GM10248 (cell line): ENCODE measurements at regions of chr1 and their contacts with region 1.

Region 1: DNA sequence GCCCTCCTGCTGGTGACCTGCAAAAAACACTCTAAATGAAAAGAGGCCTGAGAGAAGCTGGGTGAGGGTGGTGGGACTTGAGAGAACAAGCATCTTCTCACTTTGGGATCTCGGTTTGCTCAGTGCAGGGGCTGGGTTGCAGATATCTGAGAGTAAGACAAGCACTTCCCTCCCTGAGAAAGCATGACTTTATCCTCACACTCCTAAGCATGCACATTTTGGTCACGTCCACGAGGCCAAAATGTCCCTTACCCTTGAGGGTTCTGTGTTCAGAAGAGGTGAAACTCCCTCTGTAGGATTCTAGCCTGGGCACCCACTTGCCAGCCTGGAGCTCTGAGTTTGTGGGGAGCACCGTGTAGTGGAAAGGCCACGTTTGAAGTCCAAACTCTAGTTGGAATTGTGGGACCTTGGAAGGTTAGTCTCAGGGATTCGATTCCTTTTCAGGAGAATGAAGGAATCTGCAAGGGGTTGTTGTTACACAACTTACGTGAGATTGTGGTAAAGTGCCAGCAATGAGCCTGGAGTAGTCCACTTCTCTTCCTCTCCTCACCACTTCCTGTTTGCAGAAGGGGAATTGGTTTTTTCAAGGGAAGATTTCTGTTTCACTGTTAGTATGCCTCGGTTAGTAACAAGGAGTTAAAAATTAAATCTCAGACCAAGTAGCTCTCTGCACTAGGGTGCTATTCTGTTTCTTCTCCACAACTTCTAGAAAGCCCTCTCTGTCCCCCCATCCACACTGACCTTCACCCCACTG is 3.0 kb downstream of the FCAMR start:
- DNase-seq: peak; percentile 41
- CTCF ChIP-seq: no peak

Region 2: DNA sequence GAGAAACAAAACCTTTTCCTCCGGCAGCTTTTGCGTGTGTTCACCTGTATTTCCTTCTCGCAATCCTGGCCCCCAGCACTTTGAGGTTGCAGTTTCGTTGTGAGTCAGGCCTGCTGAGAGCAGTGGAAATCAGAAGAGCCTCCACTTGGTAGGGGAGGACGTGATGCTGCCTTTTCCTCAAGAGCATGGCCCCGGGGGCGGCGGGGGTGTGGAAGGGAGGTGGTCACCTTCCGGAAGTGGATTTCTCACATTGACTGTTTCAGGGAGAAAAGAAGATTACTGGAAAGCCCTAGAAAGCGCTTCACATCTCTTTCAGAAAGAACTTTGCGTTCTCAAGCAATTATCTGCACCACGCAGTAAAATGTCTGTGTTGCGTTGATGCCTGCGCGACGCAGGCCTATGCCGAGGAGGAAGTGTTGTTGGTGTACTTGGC is 182.8 kb before region 1 on chr1:
- CTCF ChIA-PET with region 1: no interaction called
- POLR2A ChIA-PET with region 1: no interaction called
- DNase-seq: peak; percentile 76
- CTCF ChIP-seq: no peak

Region 3: DNA sequence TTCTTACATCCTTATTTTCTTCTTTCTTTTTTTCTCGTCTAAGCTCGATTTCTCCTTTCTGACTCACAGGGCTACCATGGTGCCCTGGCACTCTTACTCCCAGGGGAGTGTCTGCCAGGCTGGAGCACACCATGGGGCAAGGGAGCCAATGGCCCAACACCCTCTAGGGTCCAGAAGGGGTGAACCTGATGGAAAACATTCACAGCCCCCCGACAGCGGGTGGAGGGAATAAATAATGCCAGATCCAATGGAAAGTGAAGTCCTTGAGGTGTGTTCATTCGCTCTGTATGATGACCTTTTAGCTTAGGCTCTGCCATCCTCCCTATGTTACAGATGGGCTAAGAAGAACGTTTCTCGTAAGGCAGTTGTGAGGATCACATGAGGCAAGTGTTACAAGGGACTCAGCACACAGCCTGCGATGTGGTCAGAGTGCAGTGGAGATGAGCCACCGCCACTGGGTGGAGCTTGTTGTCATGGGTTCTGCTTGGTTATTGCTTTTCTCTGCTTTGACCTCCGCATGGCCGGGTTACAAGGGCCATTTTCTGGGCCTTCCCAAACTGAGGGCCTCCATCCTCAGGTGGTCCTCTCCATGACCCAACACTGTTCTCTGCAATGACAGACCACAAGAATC is 42.1 kb before region 1 on chr1:
- CTCF ChIA-PET with region 1: interaction called, 416 read pairs
- POLR2A ChIA-PET with region 1: interaction called, 3 read pairs
- DNase-seq: peak; percentile 81
- CTCF ChIP-seq: peak; percentile 69

Region 4: GRCh38 chr1:206935491-206936067 is 31.7 kb before region 1 on chr1:
- CTCF ChIA-PET with region 1: interaction called, 416 read pairs
- POLR2A ChIA-PET with region 1: no interaction called
- DNase-seq: peak; percentile 64
- CTCF ChIP-seq: peak; percentile 49

Region 5: DNA sequence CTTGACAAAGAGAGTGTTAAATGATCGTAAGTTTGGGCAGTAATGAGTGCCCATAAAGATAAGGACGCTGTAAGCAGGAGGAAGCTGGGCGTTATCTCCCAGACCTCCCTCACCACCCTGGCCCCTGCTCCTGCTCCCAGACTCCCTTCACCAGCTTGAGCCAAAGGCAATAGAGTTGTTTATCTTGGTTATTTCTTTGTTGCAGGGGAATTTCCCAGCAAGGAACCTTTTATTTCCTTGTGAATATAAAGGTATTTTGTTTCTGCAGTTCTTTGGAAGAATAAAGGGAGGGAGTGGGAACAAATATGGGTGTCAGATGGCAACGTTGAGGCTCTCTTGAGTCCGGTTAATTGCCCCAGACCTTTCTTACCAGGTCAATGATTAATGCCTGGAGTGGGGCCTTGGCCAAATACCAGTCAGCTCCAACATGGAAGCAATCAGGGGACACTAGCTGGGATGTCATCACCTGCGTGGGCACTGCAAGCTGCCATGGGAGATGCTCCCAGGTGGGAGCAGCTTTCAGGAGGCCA is 25.4 kb before region 1 on chr1:
- CTCF ChIA-PET with region 1: interaction called, 416 read pairs
- POLR2A ChIA-PET with region 1: no interaction called
- DNase-seq: no peak
- CTCF ChIP-seq: no peak

Region 6: DNA sequence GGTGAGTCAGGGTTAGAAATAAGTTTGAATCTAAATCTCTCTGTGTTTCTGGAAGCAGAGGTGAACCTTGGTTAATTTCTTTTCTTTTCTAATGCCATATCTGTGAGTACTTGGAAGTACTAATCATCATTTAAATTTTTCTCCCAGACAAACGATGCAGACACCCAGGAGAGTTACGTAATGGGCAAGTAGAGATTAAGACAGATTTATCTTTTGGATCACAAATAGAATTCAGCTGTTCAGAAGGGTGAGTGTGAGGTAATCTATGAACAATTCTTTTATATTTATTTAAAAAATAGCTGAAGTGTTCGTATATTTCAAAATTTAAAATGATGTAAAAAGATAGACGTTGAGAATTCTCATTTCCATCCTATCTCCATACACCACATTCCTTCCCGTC is 148.0 kb after region 1 on chr1:
- CTCF ChIA-PET with region 1: no interaction called
- POLR2A ChIA-PET with region 1: no interaction called
- DNase-seq: no peak
- CTCF ChIP-seq: no peak